Activated T-helper 2 cell treated with anti-CD3 and anti-CD28 coated beads, Interferon-gamma antibody, Interleukin-2, Interleukin-4, amounts not matched to agents 10 μg/mL and 5 μg/mL and 100 μg/mL, durations not matched to agents 14 hours and 24 hours and 36 hours (primary cell): ENCODE measurements at regions of chr1 and their contacts with region 1.

Region 1: DNA sequence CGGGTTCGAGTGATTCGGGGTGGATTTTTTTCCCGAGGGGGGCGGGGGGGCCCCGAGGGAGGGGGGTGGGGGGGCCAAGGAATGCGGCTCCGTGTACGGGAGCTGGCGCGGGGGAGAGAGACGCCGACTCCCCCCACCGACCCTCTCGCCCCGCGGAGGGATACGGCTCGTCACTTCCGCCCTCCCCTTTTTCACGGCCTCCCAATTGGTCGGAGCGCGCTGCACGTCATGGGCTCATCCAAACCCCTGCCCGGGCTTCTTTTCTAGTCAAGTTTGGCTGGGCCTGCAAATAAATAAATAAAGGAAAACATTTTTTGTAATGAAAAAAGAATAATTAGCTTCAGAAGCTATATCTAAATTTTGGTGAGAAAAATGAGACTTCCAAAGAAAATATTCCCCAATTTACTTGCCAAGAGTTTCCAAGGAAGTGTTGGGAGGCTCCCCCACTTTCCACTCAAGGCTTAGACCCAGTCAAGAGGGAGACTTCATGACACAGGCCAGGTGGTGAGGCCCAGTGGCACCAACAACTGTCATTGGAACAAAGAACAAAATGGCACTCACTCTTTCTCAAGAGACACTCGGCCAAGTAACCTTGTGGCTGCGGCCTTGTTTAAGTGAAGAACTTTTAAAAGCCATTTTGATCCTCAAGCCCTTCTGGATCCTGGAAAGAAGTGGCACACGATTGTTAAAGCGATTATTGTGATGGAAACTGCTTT is at the start of gene POGZ:
- DNase-seq: peak; percentile 89
- H3K4me3 Mint-ChIP-seq: peak within 1 kb of the TSS; percentile 93
- H3K27ac Mint-ChIP-seq: peak within 1 kb of the TSS; percentile 94
- H3K4me1 Mint-ChIP-seq: peaks cover 17% of the 10 kb centered on the region
- H3K27me3 Mint-ChIP-seq: peaks cover 11% of the 10 kb centered on the region
- total RNA-seq, gene POGZ: 89.1 and 93.7 TPM in 2 replicates

Region 2: GRCh38 chr1:151443846-151444782 is 15.4 kb before region 1 on chr1:
- intact Hi-C with region 1: loop called (anchors 2 kb)
- DNase-seq: peak; percentile 58
- H3K4me3 Mint-ChIP-seq: no peak overlapping the region
- H3K27ac Mint-ChIP-seq: peak overlapping the region; percentile 33
- H3K4me1 Mint-ChIP-seq: peaks cover 39% of the 10 kb centered on the region
- H3K27me3 Mint-ChIP-seq: no peaks in the 10 kb centered on the region

Region 3: GRCh38 chr1:151472856-151473731 is 13.6 kb after region 1 on chr1:
- intact Hi-C with region 1: loop called (anchors 1 kb)
- DNase-seq: peak; percentile 12
- H3K4me3 Mint-ChIP-seq: peak overlapping the region; percentile 69
- H3K27ac Mint-ChIP-seq: peak overlapping the region; percentile 58
- H3K4me1 Mint-ChIP-seq: peaks cover 22% of the 10 kb centered on the region
- H3K27me3 Mint-ChIP-seq: peaks cover 3% of the 10 kb centered on the region

Region 4: DNA sequence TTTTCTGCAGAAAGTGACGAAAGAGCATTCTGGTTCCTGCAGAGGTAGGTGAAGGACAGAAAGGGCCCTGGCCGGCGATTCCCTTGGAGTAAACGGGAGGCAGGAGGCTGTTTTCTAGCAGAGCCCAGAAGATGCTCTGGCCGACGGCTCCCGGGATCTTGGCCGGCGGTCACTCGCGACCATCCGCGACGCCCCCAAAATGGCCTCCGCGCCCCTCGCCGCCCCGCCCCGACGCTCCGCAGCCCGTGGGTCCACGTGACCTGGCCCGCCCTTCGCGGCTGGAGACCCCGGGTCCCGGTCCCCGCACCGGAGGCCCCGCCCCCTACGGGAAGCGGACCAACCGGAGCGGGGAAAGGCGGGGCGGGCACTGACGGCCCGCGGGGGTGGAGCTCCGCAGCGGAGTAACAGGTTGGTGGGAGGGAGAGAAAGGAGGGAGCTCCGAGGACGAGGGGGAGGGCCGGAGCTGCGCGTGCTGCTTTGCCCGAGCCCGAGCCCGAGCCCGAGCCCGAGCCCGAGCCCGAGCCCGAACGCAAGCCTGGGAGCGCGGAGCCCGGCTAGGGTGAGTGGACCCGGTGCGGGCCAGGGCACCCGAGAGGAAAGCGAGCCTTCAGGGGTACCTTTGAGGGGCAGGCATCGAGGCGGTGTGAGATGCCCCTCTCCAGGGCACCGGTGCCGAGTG is 51.6 kb after region 1 on chr1 and contains the start of gene CGN:
- intact Hi-C with region 1: loop called (anchors 5 kb)
- DNase-seq: peak; percentile 79
- H3K4me3 Mint-ChIP-seq: peak within 1 kb of the TSS; percentile 81
- H3K27ac Mint-ChIP-seq: no peak within 1 kb of the TSS
- H3K4me1 Mint-ChIP-seq: peaks cover 20% of the 10 kb centered on the region
- H3K27me3 Mint-ChIP-seq: peaks cover 28% of the 10 kb centered on the region
- total RNA-seq, gene CGN: 0.34 and 0.50 TPM in 2 replicates

Region 5: DNA sequence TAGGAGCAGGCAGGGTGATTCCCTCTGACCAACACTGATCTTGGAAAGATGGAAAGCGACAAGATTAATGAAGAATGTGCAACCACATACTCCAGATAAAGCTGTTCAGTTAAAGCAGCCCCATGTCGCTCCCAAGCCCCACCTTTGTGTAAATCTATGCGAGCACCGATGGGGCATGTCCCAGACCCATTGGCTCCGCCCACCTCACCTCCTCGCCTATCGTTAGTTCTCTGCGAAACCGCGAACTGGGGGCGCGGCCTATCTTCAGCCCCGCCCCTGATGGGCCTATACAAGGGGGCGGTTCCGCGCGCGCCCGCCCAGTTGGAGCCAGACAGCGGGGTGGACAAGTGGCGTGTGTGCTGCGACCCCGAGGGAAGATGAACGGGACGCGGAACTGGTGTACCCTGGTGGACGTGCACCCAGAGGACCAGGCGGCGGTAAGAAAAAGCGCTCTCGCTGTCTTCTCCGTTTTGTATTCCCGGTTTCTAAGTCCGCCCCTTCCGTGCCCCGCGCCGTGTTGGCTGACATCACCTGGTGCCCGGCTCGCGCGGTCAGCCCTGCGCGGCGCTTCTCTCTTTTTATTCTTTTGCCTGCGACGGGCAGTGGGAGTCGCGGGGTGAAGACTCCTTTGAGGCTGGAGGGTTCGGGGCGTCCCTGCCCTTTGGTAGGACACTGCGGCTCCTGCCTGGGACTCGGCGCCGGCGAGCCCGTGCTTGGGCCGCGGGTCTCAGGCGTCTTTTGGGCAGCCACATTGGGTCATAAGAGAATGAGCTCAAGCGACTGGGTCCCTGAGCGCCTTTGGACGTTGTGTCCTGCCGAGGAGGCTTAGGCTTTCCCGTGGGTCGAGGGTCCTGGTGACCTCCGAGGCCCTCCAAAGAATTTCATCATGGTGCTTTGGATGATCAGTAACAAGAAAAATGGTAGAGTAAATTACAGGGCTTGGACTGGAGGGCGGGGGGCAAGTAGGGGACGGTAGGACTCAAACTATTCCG is 80.8 kb after region 1 on chr1 and contains the start of gene TUFT1:
- intact Hi-C with region 1: loop called (anchors 5 kb)
- DNase-seq: peak; percentile 91
- H3K4me3 Mint-ChIP-seq: peak within 1 kb of the TSS; percentile 89
- H3K27ac Mint-ChIP-seq: peak within 1 kb of the TSS; percentile 57
- H3K4me1 Mint-ChIP-seq: peaks cover 18% of the 10 kb centered on the region
- H3K27me3 Mint-ChIP-seq: peaks cover 7% of the 10 kb centered on the region
- total RNA-seq, gene TUFT1: 2.6 TPM in 2 replicates

Region 6: GRCh38 chr1:151565502-151566189 is 106.2 kb after region 1 on chr1:
- intact Hi-C with region 1: no loop called
- DNase-seq: no peak
- H3K4me3 Mint-ChIP-seq: no peak overlapping the region
- H3K27ac Mint-ChIP-seq: no peak overlapping the region
- H3K4me1 Mint-ChIP-seq: peaks cover 5% of the 10 kb centered on the region
- H3K27me3 Mint-ChIP-seq: no peaks in the 10 kb centered on the region

Region 7: GRCh38 chr1:151790071-151790940 is 330.8 kb after region 1 on chr1 and contains the start of gene TDRKH:
- intact Hi-C with region 1: loop called (anchors 2 kb)
- DNase-seq: peak; percentile 99
- H3K4me3 Mint-ChIP-seq: peak within 1 kb of the TSS; percentile 99
- H3K27ac Mint-ChIP-seq: peak within 1 kb of the TSS; percentile 91
- H3K4me1 Mint-ChIP-seq: peaks cover 24% of the 10 kb centered on the region
- H3K27me3 Mint-ChIP-seq: peaks cover 1% of the 10 kb centered on the region
- total RNA-seq, gene TDRKH: 18.2 and 18.4 TPM in 2 replicates

Region 8: GRCh38 chr1:152034646-152035405 is 575.3 kb after region 1 on chr1:
- intact Hi-C with region 1: loop called (anchors 10 kb)
- DNase-seq: peak; percentile 66
- H3K4me3 Mint-ChIP-seq: peak overlapping the region; percentile 99
- H3K27ac Mint-ChIP-seq: peak overlapping the region; percentile 97
- H3K4me1 Mint-ChIP-seq: peaks cover 33% of the 10 kb centered on the region
- H3K27me3 Mint-ChIP-seq: no peaks in the 10 kb centered on the region